ENCODE measurements at regions of chr17 and their contacts with region 1.

Region 1: GRCh38 chr17:50626037-50626574 is 8.6 kb upstream of the ABCC3 start:
- DNase-seq: peak; percentile 88
- H3K4me3 Mint-ChIP-seq: no peak overlapping the region
- H3K27ac Mint-ChIP-seq: no peak overlapping the region
- H3K4me1 Mint-ChIP-seq: peaks cover 10% of the 10 kb centered on the region
- H3K27me3 Mint-ChIP-seq: peaks cover 31% of the 10 kb centered on the region

Region 2: DNA sequence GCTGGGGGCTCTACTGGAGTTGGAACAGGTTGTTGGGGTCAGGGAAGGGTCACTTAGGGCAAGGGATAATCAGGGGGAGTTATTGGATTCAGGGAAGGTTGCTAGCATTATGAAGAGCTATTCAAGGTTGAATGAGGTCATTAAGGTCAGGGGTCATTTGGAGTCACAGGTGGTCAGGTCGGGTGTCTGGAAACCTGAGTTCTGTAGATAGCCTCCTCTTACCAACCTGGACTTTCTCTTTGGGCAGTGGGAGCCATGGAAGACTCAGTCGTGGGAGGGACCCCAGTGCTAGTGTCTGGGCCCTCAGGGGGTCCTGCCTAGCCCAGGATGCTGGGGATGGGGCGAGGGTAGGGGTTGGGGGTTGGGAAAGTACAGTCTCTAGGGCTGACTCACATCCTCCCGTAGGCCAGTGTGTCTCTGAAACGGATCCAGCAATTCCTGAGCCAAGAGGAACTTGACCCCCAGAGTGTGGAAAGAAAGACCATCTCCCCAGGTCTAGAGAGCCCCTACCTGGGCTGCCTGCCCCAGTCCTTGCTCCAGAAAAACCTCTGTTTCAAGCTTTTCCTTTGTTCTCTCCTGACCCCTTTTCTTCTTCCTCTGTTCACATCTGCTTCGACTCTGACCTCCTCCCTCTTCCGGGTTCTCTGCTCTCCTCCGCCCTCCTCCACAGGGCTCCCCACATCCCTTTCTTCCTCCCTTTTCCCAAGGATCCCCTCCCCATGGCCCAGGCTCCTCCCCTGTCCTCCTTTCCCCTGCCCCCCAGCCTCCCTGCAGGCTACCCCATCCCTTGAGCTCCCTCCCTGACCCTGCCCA is 42.1 kb after region 1 on chr17:
- intact Hi-C with region 1: loop called (anchors 5 kb)
- DNase-seq: no peak
- H3K4me3 Mint-ChIP-seq: no peak overlapping the region
- H3K27ac Mint-ChIP-seq: no peak overlapping the region
- H3K4me1 Mint-ChIP-seq: no peaks in the 10 kb centered on the region
- H3K27me3 Mint-ChIP-seq: no peaks in the 10 kb centered on the region

Region 3: GRCh38 chr17:50681263-50682210 is 55.4 kb after region 1 on chr17:
- intact Hi-C with region 1: loop called (anchors 5 kb)
- DNase-seq: no peak
- H3K4me3 Mint-ChIP-seq: no peak overlapping the region
- H3K27ac Mint-ChIP-seq: no peak overlapping the region
- H3K4me1 Mint-ChIP-seq: peaks cover 4% of the 10 kb centered on the region
- H3K27me3 Mint-ChIP-seq: peaks cover 21% of the 10 kb centered on the region